ENCODE measurements at regions of chr1 and their contacts with region 1.

Region 1: GRCh38 chr1:169308309-169309068 is 59.1 kb downstream of the NME7 start:
- DNase-seq: no peak
- H3K4me3 ChIP-seq: no peak overlapping the region
- H3K4me3 Mint-ChIP-seq: peak overlapping the region in 1 of 7 donors; percentile 16
- H3K27ac ChIP-seq: no peak overlapping the region
- H3K27ac Mint-ChIP-seq: no peak overlapping the region
- H3K4me1 ChIP-seq: peaks cover 3% of the 10 kb centered on the region
- H3K4me1 Mint-ChIP-seq: peaks cover 13 to 18% (median 17%) of the 10 kb centered on the region in 3 donors
- H3K27me3 ChIP-seq: no peaks in the 10 kb centered on the region
- H3K27me3 Mint-ChIP-seq: no peaks in the 10 kb centered on the region

Region 2: DNA sequence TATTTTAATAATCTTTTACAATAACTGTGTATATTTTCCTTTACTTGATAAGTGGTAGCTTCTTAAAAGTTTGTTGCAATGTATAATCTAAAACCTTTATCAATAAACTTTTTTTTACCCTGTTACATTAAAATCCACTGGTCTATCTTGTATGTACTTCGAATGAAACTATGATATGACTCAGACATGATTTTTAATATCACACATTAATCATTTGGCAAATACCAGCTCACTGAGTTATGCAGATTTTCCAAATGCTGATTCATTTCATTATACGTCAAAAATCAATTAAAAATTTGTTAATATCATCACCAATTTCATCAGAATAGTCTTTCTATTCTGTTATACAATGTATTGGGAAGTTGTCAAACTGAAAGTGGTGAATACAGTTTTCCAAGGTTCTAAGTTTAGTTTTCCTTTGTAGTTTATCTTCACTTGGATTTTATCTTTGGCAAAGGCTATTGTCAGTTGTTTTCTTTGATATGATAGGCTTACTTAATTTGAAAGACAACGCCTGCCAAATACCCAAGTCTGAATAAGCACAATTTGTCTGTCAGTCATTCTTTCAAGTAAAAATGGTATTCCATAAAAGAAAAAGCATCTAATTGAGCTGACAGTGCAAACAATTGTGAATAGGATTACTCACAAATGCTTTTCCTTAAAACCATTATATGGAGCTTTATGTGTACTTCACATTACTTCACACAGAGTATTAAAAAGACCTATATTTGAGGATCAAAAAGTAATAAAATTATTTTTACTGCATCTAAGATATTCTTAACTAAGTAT is 67.8 kb before region 1 on chr1:
- CTCF ChIA-PET with region 1: no interaction called
- POLR2A ChIA-PET with region 1: no interaction called
- DNase-seq: no peak
- H3K4me3 ChIP-seq: no peak overlapping the region
- H3K4me3 Mint-ChIP-seq: no peak overlapping the region
- H3K27ac ChIP-seq: no peak overlapping the region
- H3K27ac Mint-ChIP-seq: no peak overlapping the region
- H3K4me1 ChIP-seq: no peaks in the 10 kb centered on the region
- H3K4me1 Mint-ChIP-seq: no peaks in the 10 kb centered on the region
- H3K27me3 ChIP-seq: no peaks in the 10 kb centered on the region
- H3K27me3 Mint-ChIP-seq: no peaks in the 10 kb centered on the region

Region 3: GRCh38 chr1:169295425-169295824 is 13.1 kb before region 1 on chr1:
- CTCF ChIA-PET with region 1: no interaction called
- POLR2A ChIA-PET with region 1: no interaction called
- DNase-seq: no peak
- H3K4me3 ChIP-seq: no peak overlapping the region
- H3K4me3 Mint-ChIP-seq: no peak overlapping the region
- H3K27ac ChIP-seq: no peak overlapping the region
- H3K27ac Mint-ChIP-seq: no peak overlapping the region
- H3K4me1 ChIP-seq: no peaks in the 10 kb centered on the region
- H3K4me1 Mint-ChIP-seq: no peaks in the 10 kb centered on the region
- H3K27me3 ChIP-seq: no peaks in the 10 kb centered on the region
- H3K27me3 Mint-ChIP-seq: no peaks in the 10 kb centered on the region

Region 4: GRCh38 chr1:169326956-169327268 is 18.4 kb after region 1 on chr1:
- CTCF ChIA-PET with region 1: no interaction called
- POLR2A ChIA-PET with region 1: interaction called, 11 read pairs
- DNase-seq: no peak
- H3K4me3 ChIP-seq: no peak overlapping the region
- H3K4me3 Mint-ChIP-seq: no peak overlapping the region
- H3K27ac ChIP-seq: no peak overlapping the region
- H3K27ac Mint-ChIP-seq: no peak overlapping the region
- H3K4me1 ChIP-seq: peaks cover 6% of the 10 kb centered on the region
- H3K4me1 Mint-ChIP-seq: peaks cover 5 to 19% (median 14%) of the 10 kb centered on the region in 3 donors
- H3K27me3 ChIP-seq: no peaks in the 10 kb centered on the region
- H3K27me3 Mint-ChIP-seq: no peaks in the 10 kb centered on the region

Measured in CD8-positive, alpha-beta memory T cell (primary cell).